Activated CD4-positive, alpha-beta T cell treated with anti-CD3 and anti-CD28 coated beads, Interleukin-2, amount 10 ng/mL, durations not matched to agents 7 days and 5 days (primary cell): ENCODE measurements at regions of chr19 and their contacts with region 1.

Region 1: GRCh38 chr19:506404-507285 is 652 bp upstream of the TPGS1 start:
- DNase-seq: peak; percentile 97
- H3K4me3 Mint-ChIP-seq: peak overlapping the region; percentile 80
- H3K27ac Mint-ChIP-seq: peak overlapping the region; percentile 99
- H3K4me1 Mint-ChIP-seq: peaks cover 57% of the 10 kb centered on the region
- H3K27me3 Mint-ChIP-seq: no peaks in the 10 kb centered on the region

Region 2: GRCh38 chr19:415292-415691 is 91.4 kb before region 1 on chr19:
- CTCF ChIA-PET with region 1: no interaction called
- POLR2A ChIA-PET with region 1: no interaction called
- DNase-seq: no peak
- H3K4me3 Mint-ChIP-seq: no peak overlapping the region
- H3K27ac Mint-ChIP-seq: no peak overlapping the region
- H3K4me1 Mint-ChIP-seq: no peaks in the 10 kb centered on the region
- H3K27me3 Mint-ChIP-seq: no peaks in the 10 kb centered on the region

Region 3: GRCh38 chr19:488505-489417 is 17.9 kb before region 1 on chr19:
- CTCF ChIA-PET with region 1: interaction called, 25 read pairs
- POLR2A ChIA-PET with region 1: no interaction called
- DNase-seq: peak; percentile 85
- H3K4me3 Mint-ChIP-seq: peak overlapping the region; percentile 71
- H3K27ac Mint-ChIP-seq: peak overlapping the region; percentile 80
- H3K4me1 Mint-ChIP-seq: peaks cover 7% of the 10 kb centered on the region
- H3K27me3 Mint-ChIP-seq: peaks cover 5% of the 10 kb centered on the region

Region 4: GRCh38 chr19:495402-496186 is 11.1 kb before region 1 on chr19:
- CTCF ChIA-PET with region 1: interaction called, 25 read pairs
- POLR2A ChIA-PET with region 1: interaction called, 3 read pairs
- DNase-seq: peak; percentile 37
- H3K4me3 Mint-ChIP-seq: no peak overlapping the region
- H3K27ac Mint-ChIP-seq: no peak overlapping the region
- H3K4me1 Mint-ChIP-seq: no peaks in the 10 kb centered on the region
- H3K27me3 Mint-ChIP-seq: peaks cover 21% of the 10 kb centered on the region

Region 5: DNA sequence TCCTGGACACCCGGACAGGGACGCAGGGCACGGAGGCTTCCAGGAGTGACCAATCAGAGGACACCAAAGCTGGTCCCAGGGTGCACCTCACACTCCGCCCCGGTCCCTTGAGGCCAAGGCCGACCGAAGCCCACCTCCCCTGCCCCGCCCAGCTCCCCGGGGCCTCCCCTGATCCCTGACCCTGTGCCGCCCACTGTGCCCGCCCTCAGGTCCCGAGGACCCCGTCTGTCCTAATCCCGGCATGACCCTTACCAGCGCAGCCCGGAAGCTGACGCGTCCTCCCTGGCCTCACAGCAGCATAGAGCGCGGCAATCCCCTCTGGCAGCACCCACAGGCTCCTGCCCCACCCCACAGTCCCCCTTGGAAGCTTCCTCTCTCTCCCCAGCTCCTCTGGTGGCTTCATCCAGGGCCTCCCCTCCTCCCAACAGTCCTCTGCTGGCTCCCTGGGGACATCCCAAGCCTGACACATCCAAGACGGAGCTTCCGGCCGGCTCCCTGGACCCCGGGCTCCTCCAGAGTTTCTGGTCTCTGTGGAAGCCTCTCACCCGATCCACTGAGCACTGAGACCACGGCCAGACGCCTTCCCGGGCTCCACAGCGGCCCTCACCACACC is 17.5 kb after region 1 on chr19:
- CTCF ChIA-PET with region 1: interaction called, 47 read pairs
- POLR2A ChIA-PET with region 1: interaction called, 7 read pairs
- DNase-seq: no peak
- H3K4me3 Mint-ChIP-seq: no peak overlapping the region
- H3K27ac Mint-ChIP-seq: no peak overlapping the region
- H3K4me1 Mint-ChIP-seq: peaks cover 3% of the 10 kb centered on the region
- H3K27me3 Mint-ChIP-seq: peaks cover 10% of the 10 kb centered on the region

Region 6: GRCh38 chr19:531009-531752 is 24.5 kb after region 1 on chr19:
- CTCF ChIA-PET with region 1: interaction called, 47 read pairs
- POLR2A ChIA-PET with region 1: interaction called, 8 read pairs
- DNase-seq: peak; percentile 84
- H3K4me3 Mint-ChIP-seq: peak overlapping the region; percentile 77
- H3K27ac Mint-ChIP-seq: peak overlapping the region; percentile 87
- H3K4me1 Mint-ChIP-seq: peaks cover 22% of the 10 kb centered on the region
- H3K27me3 Mint-ChIP-seq: peaks cover 3% of the 10 kb centered on the region